ENCODE measurements at regions of chr6 and their contacts with region 1.

Region 1: DNA sequence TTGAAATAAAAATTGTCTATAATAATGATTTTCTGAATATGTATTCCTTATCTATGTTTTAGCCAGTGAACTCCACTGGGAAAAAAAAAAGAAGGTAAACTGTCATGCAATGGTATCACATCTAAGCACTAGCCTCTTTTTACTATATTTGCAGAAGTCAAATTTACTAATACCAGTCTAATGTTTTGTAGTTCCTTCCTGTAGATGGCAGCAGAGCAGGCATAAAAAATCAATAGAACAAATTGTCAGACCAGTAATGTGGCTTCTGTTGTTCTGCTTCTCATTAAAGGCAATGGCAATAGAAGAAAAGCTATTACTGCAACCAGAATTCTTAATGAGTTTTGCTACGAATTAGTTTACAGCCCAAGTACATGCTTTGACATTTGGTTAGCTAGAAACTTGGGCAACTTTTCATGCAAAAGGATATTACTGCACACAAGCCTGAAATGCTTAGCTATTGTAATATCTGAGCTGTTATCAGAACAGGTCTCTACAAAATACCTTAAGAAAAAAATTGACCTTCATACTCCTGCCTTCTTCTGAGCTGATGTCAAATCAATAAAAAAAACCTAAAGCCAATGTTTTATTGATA is 476.9 kb downstream of the KHDRBS2 start:
- ATAC-seq: peak in 6 of 8 experiments; percentile 35 to 71 (median 46)
- H3K4me3 ChIP-seq: no peak overlapping the region
- H3K27ac ChIP-seq: no peak overlapping the region
- H3K4me1 ChIP-seq: no peaks in the 10 kb centered on the region

Region 2: GRCh38 chr6:62150048-62150663 is 341.1 kb after region 1 on chr6:
- in situ Hi-C with region 1: loop called in 1 of 9 experiments (anchors 25 kb)
- ATAC-seq: peak in 5 of 8 experiments; percentile 39 to 79 (median 55)
- H3K4me3 ChIP-seq: no peak overlapping the region
- H3K27ac ChIP-seq: no peak overlapping the region
- H3K4me1 ChIP-seq: no peaks in the 10 kb centered on the region

Region 3: GRCh38 chr6:62265906-62266525 is 456.9 kb after region 1 on chr6:
- in situ Hi-C with region 1: loop called in 1 of 9 experiments (anchors 25 kb)
- ATAC-seq: peak in 5 of 8 experiments; percentile 61 to 100 (median 98)
- H3K4me3 ChIP-seq: no peak overlapping the region
- H3K27ac ChIP-seq: peak overlapping the region in 1 of 2 donors; percentile 17
- H3K4me1 ChIP-seq: peaks cover 6 to 13% of the 10 kb centered on the region in 2 donors